ENCODE measurements at regions of chr1 and their contacts with region 1.

Region 1: GRCh38 chr1:108828022-108828961 is 28.6 kb downstream of the AKNAD1 start:
- DNase-seq: peak; percentile 82
- ATAC-seq: peak; percentile 87
- H3K4me3 Mint-ChIP-seq: no peak overlapping the region
- H3K27ac Mint-ChIP-seq: no peak overlapping the region
- H3K4me1 Mint-ChIP-seq: peaks cover 11% of the 10 kb centered on the region
- H3K27me3 Mint-ChIP-seq: peaks cover 3% of the 10 kb centered on the region

Region 2: DNA sequence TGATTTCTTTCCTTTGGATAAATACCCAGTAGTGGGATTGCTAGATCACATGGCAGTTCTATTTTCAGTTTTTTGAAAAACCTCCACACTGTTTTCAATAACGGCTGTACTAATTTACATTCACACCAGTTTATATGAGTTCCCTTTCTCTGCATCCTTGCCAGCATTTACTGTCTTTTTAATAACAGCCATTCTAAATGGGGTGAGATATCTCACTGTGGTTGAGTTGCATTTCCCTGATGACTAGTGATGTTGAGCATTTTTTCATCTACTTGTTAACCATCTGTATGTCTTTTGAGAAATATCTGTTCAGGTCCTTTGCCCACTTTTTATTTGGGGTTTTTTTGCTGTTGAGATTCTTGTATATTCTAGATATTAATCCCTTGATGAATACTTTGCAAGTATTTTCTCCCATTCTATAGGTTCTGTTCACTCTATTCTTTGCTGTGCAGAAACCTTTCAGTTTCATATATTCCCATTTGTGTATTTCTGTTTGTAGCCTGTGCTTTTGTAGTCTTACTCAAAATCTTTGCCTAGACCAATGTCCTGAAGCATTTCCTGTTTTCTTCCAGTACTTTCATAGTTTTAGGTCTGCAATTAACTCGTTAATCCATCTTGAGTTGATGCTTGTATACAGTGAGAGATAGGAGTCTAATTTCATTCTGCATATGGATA is 174.7 kb before region 1 on chr1:
- CTCF ChIA-PET with region 1: no interaction called
- POLR2A ChIA-PET with region 1: no interaction called
- DNase-seq: no peak
- ATAC-seq: no peak
- H3K4me3 Mint-ChIP-seq: no peak overlapping the region
- H3K27ac Mint-ChIP-seq: no peak overlapping the region
- H3K4me1 Mint-ChIP-seq: peaks cover 38% of the 10 kb centered on the region
- H3K27me3 Mint-ChIP-seq: no peaks in the 10 kb centered on the region

Region 3: GRCh38 chr1:108779455-108779854 is 48.8 kb before region 1 on chr1:
- CTCF ChIA-PET with region 1: no interaction called
- POLR2A ChIA-PET with region 1: no interaction called
- DNase-seq: no peak
- ATAC-seq: no peak
- H3K4me3 Mint-ChIP-seq: no peak overlapping the region
- H3K27ac Mint-ChIP-seq: no peak overlapping the region
- H3K4me1 Mint-ChIP-seq: no peaks in the 10 kb centered on the region
- H3K27me3 Mint-ChIP-seq: no peaks in the 10 kb centered on the region

Region 4: DNA sequence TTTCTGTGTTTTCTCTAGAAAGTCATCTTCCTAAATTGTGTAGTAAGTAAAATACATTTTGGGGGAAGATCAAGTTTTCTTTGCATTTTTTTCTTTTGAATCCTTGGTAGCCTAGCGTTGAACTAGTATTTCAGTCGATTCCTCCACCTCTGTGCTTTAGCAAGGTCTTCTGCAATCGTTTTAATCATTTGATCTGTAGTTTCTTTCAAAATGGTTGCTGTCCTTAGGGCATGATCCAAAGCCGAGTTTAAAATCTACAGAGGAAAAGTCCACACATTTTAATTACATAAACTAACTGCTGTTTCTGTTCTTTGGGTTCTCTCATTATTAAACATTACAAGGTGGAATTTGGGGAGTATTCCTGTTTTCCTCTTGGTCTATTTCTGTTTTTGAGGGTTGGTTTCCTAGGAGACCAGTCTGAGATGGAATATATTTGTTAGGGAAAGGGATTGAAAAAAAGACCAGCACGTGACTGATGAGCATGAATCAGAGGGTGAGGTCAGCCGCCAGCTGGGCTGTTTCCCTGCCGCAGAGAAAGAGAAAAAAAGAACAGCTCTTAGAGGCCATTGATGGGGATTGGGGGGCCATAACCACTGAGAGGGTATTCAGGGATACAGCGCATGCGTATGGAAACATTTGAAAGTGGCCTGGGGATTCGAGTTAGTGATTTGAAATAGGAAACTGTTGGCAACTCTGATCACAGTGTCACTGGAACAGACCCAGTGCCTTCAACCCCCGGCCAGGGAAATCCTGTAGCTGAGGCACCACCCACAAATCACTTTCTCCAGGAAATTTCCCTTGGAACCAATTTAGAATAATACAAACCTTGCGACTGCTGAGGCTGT is 12.0 kb before region 1 on chr1:
- CTCF ChIA-PET with region 1: interaction called, 13 read pairs
- POLR2A ChIA-PET with region 1: no interaction called
- DNase-seq: no peak
- ATAC-seq: no peak
- H3K4me3 Mint-ChIP-seq: no peak overlapping the region
- H3K27ac Mint-ChIP-seq: no peak overlapping the region
- H3K4me1 Mint-ChIP-seq: no peaks in the 10 kb centered on the region
- H3K27me3 Mint-ChIP-seq: peaks cover 10% of the 10 kb centered on the region

Region 5: GRCh38 chr1:108852221-108852975 is 24.1 kb after region 1 on chr1:
- CTCF ChIA-PET with region 1: interaction called, 14 read pairs
- POLR2A ChIA-PET with region 1: no interaction called
- DNase-seq: no peak
- ATAC-seq: peak; percentile 51
- H3K4me3 Mint-ChIP-seq: no peak overlapping the region
- H3K27ac Mint-ChIP-seq: peak overlapping the region; percentile 31
- H3K4me1 Mint-ChIP-seq: peaks cover 20% of the 10 kb centered on the region
- H3K27me3 Mint-ChIP-seq: peaks cover 25% of the 10 kb centered on the region

Region 6: GRCh38 chr1:108892356-108893140 is 64.3 kb after region 1 on chr1:
- CTCF ChIA-PET with region 1: interaction called, 186 read pairs
- POLR2A ChIA-PET with region 1: interaction called, 3 read pairs
- DNase-seq: no peak
- ATAC-seq: no peak
- H3K4me3 Mint-ChIP-seq: no peak overlapping the region
- H3K27ac Mint-ChIP-seq: no peak overlapping the region
- H3K4me1 Mint-ChIP-seq: peaks cover 2% of the 10 kb centered on the region
- H3K27me3 Mint-ChIP-seq: no peaks in the 10 kb centered on the region

Region 7: DNA sequence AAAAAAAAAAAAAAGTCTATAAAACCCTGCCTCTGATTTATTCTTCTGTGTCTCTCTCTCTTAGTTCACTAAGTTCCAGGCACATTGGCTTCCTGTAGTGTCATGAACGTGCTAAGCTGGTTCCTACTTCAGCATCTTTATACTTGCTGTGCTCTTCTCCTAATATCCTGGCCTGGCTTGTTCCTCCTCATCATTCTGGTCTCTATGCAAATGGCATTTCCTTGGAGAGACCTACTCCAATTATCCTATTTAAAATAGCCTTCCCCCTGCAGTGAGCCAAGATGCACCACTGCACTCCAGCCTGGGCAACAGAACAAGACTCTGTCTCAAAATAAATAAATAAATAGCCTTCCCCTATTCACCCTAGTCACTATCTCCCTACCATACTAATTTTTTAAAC is 144.7 kb after region 1 on chr1:
- CTCF ChIA-PET with region 1: no interaction called
- POLR2A ChIA-PET with region 1: no interaction called
- DNase-seq: no peak
- ATAC-seq: no peak
- H3K4me3 Mint-ChIP-seq: no peak overlapping the region
- H3K27ac Mint-ChIP-seq: no peak overlapping the region
- H3K4me1 Mint-ChIP-seq: peaks cover 5% of the 10 kb centered on the region
- H3K27me3 Mint-ChIP-seq: no peaks in the 10 kb centered on the region

Region 8: GRCh38 chr1:109048335-109048734 is 220.0 kb after region 1 on chr1:
- CTCF ChIA-PET with region 1: no interaction called
- POLR2A ChIA-PET with region 1: no interaction called
- DNase-seq: no peak
- ATAC-seq: no peak
- H3K4me3 Mint-ChIP-seq: no peak overlapping the region
- H3K27ac Mint-ChIP-seq: no peak overlapping the region
- H3K4me1 Mint-ChIP-seq: peaks cover 3% of the 10 kb centered on the region
- H3K27me3 Mint-ChIP-seq: peaks cover 19% of the 10 kb centered on the region

Region 9: GRCh38 chr1:109112652-109113285 is 284.5 kb after region 1 on chr1:
- CTCF ChIA-PET with region 1: interaction called, 11 read pairs
- POLR2A ChIA-PET with region 1: no interaction called
- DNase-seq: peak; percentile 91
- ATAC-seq: peak; percentile 63
- H3K4me3 Mint-ChIP-seq: peak overlapping the region; percentile 72
- H3K27ac Mint-ChIP-seq: peak overlapping the region; percentile 58
- H3K4me1 Mint-ChIP-seq: peaks cover 33% of the 10 kb centered on the region
- H3K27me3 Mint-ChIP-seq: peaks cover 26% of the 10 kb centered on the region